Caco-2 (cell line): ENCODE measurements at regions of chr13 and their contacts with region 1.

Region 1: GRCh38 chr13:45807520-45808099 is 43.9 kb downstream of the SIAH3 start:
- DNase-seq: peak; percentile 61 to 63
- H3K4me3 ChIP-seq: no peak overlapping the region
- H3K4me3 Mint-ChIP-seq: no peak overlapping the region
- H3K27ac Mint-ChIP-seq: no peak overlapping the region
- H3K4me1 ChIP-seq: no peaks in the 10 kb centered on the region
- H3K4me1 Mint-ChIP-seq: no peaks in the 10 kb centered on the region
- H3K27me3 ChIP-seq: peaks cover 1% of the 10 kb centered on the region; the same call in 1 of the 2 replicates
- H3K27me3 Mint-ChIP-seq: peaks cover 9% of the 10 kb centered on the region
- CTCF ChIP-seq: peak; percentile 60 to 82

Region 2: DNA sequence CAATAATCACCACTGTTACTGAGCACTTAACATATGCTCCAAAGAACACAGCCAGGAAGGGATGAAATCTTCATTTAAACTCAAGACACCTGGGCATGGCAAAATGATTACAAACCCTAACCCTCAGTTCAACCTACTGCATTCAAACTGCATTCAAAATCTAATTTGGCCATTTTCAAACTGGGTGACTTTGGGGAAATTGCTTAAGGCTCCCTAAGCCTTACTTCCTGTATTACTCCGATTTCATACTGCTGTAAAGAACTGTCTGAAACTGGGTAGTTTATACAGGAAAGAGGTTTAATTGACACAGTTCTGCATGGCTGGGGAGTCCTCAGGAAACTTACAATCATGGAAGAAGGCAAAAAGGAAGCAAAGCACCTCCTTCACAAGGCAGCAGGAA is 55.1 kb before region 1 on chr13:
- CTCF ChIA-PET with region 1: no interaction called
- POLR2A ChIA-PET with region 1: no interaction called
- intact Hi-C with region 1: no loop called
- DNase-seq: no peak
- H3K4me3 ChIP-seq: no peak overlapping the region
- H3K4me3 Mint-ChIP-seq: no peak overlapping the region
- H3K27ac Mint-ChIP-seq: no peak overlapping the region
- H3K4me1 ChIP-seq: no peaks in the 10 kb centered on the region
- H3K4me1 Mint-ChIP-seq: peaks cover 11% of the 10 kb centered on the region
- H3K27me3 ChIP-seq: no peaks in the 10 kb centered on the region
- H3K27me3 Mint-ChIP-seq: no peaks in the 10 kb centered on the region
- CTCF ChIP-seq: no peak

Region 3: DNA sequence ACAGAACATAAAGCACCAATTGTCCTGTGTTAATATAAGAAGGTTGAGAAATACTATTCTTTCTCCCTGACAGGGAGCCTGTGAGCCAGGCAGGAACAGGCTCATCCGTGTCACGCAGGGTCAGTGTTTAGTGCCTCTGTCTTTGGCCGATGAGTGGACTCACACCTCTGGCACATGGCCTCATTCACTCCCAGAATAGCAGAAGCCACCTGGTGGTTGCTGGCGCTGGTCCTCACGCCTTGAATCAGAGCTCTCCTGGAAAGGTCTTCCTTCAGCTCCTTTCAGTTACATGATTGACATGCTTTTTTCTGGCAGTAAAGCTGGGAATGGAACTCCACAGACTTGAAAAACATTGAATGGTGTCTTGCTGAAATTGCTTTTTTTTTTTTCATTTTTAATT is 72.1 kb after region 1 on chr13:
- CTCF ChIA-PET with region 1: interaction called, 26 read pairs
- POLR2A ChIA-PET with region 1: no interaction called
- intact Hi-C with region 1: loop called (anchors 2 kb)
- DNase-seq: peak; percentile 62
- H3K4me3 ChIP-seq: no peak overlapping the region
- H3K4me3 Mint-ChIP-seq: no peak overlapping the region
- H3K27ac Mint-ChIP-seq: no peak overlapping the region
- H3K4me1 ChIP-seq: no peaks in the 10 kb centered on the region
- H3K4me1 Mint-ChIP-seq: peaks cover 7% of the 10 kb centered on the region
- H3K27me3 ChIP-seq: no peaks in the 10 kb centered on the region
- H3K27me3 Mint-ChIP-seq: peaks cover 16% of the 10 kb centered on the region
- CTCF ChIP-seq: peak; percentile 58 to 77

Region 4: GRCh38 chr13:46010148-46010547 is 202.5 kb after region 1 on chr13:
- CTCF ChIA-PET with region 1: interaction called, 6 read pairs
- POLR2A ChIA-PET with region 1: no interaction called
- intact Hi-C with region 1: loop called (anchors 1 kb)
- DNase-seq: peak in 1 of 2 experiments; percentile 18
- H3K4me3 ChIP-seq: no peak overlapping the region
- H3K4me3 Mint-ChIP-seq: no peak overlapping the region
- H3K27ac Mint-ChIP-seq: no peak overlapping the region
- H3K4me1 ChIP-seq: no peaks in the 10 kb centered on the region
- H3K4me1 Mint-ChIP-seq: no peaks in the 10 kb centered on the region
- H3K27me3 ChIP-seq: no peaks in the 10 kb centered on the region
- H3K27me3 Mint-ChIP-seq: no peaks in the 10 kb centered on the region
- CTCF ChIP-seq: peak; percentile 34 to 50